ENCODE measurements at regions of chr11 and their contacts with region 1.

Region 1: GRCh38 chr11:130522284-130522961 is 74.0 kb downstream of the ADAMTS15 start:
- DNase-seq: peak; percentile 94
- H3K4me3 ChIP-seq: no peak overlapping the region
- H3K27ac ChIP-seq: peak overlapping the region; percentile 65 to 78
- H3K4me1 ChIP-seq: peaks cover 14% of the 10 kb centered on the region
- H3K27me3 ChIP-seq: no peaks in the 10 kb centered on the region
- CTCF ChIP-seq: no peak
- POLR2A ChIP-seq: no peak

Region 2: DNA sequence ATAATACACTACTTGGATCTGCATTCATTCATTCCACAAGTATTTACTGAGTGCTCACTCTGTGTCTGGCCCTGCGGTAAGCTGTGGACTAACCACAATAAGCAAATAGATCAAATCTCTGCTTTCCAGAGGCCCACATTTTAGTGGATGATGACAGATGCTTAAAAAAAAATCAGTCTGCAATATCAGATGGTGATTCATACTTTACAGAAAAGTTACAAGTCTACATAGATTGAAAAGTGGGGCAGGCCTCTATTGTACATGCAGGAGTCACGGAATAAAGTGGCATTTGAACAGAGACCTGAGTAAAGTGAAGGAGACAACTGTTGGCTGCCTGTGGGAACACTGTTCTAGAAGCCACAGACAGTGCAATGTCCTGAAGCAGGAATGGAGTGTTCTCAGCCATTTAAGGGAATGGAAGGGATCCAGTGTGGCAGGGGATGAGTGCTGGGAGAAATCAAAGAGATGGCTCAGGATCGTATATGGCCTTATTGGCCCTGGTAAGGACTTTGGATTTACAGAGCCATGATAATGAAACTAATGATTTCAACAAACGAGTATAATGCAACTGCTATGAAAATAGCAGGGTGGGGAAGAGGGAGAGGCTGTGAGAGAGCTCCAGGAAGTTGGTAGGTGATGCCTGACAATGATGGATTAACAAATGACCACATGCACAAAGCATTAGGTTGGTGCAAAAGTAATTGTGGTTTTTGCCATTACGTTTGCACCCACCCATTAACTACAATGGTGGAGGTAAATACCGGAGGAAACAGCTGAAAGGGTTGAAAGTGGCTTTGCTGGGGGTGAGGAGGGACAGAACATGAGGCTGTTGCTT is 675.7 kb before region 1 on chr11:
- intact Hi-C with region 1: no loop called
- DNase-seq: no peak
- H3K4me3 ChIP-seq: no peak overlapping the region
- H3K27ac ChIP-seq: no peak overlapping the region
- H3K4me1 ChIP-seq: no peaks in the 10 kb centered on the region
- H3K27me3 ChIP-seq: no peaks in the 10 kb centered on the region
- CTCF ChIP-seq: no peak
- POLR2A ChIP-seq: no peak

Region 3: GRCh38 chr11:130478204-130478701 is 44.2 kb before region 1 on chr11:
- intact Hi-C with region 1: no loop called
- DNase-seq: peak; percentile 67
- H3K4me3 ChIP-seq: no peak overlapping the region
- H3K27ac ChIP-seq: peak overlapping the region; percentile 56 to 76
- H3K4me1 ChIP-seq: peaks cover 28% of the 10 kb centered on the region
- H3K27me3 ChIP-seq: no peaks in the 10 kb centered on the region
- CTCF ChIP-seq: no peak
- POLR2A ChIP-seq: no peak

Region 4: GRCh38 chr11:130601141-130601540 is 78.7 kb after region 1 on chr11:
- intact Hi-C with region 1: loop called (anchors 10 kb)
- DNase-seq: peak; percentile 70
- H3K4me3 ChIP-seq: no peak overlapping the region
- H3K27ac ChIP-seq: no peak overlapping the region
- H3K4me1 ChIP-seq: peaks cover 5% of the 10 kb centered on the region
- H3K27me3 ChIP-seq: no peaks in the 10 kb centered on the region
- CTCF ChIP-seq: no peak
- POLR2A ChIP-seq: no peak

Measured in testis (tissue), 5 donors.